GM12878 (cell line): ENCODE measurements at regions of chr13 and their contacts with region 1.

Region 1: GRCh38 chr13:46687810-46688209 is 109.2 kb downstream of the ESD start:
- DNase-seq: no peak
- ATAC-seq: peak; percentile 69
- H3K4me3 ChIP-seq: no peak overlapping the region
- H3K27ac ChIP-seq: no peak overlapping the region
- H3K4me1 ChIP-seq: peaks cover 7% of the 10 kb centered on the region; the same call in 1 of the 2 replicates
- H3K27me3 ChIP-seq: no peaks in the 10 kb centered on the region
- CTCF ChIP-seq: no peak
- EP300 ChIP-seq: no peak
- POLR2A ChIP-seq: no peak
- RAD21 ChIP-seq: no peak

Region 2: DNA sequence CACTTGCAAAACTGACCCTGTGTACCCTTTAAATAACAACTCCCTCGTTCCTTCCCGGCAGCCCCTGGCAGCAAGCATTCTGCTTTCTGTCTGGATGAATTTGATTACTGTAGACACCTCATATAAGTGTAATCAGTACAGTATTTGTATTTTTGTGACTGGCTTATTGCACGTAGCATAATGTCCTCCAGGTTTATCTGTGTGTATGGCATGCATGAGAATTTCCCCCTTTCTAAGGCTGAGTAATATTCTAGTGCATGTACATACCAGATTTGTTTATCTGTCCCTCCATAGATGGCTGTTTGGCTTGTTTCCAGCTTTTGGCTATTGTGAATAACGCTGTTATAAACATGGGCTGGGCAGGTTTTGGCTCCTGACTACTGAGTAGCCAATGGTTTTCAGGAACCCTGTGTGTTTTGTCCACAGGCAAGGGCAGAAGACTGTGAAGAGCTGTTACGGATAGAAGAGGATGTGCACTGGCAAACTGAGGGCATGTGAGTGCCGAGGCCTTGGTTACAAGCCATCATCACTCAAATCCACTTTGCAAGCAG is 11.2 kb after region 1 on chr13:
- CTCF ChIA-PET with region 1: interaction called, 7 read pairs
- POLR2A ChIA-PET with region 1: interaction called, 4 read pairs
- RAD21 ChIA-PET with region 1: interaction called, 3 read pairs
- SMC1A ChIA-PET with region 1: interaction called, 10 read pairs
- in situ Hi-C with region 1: no loop called
- intact Hi-C with region 1: no loop called
- DNase-seq: no peak
- ATAC-seq: no peak
- H3K4me3 ChIP-seq: no peak overlapping the region
- H3K27ac ChIP-seq: no peak overlapping the region
- H3K4me1 ChIP-seq: no peaks in the 10 kb centered on the region
- H3K27me3 ChIP-seq: no peaks in the 10 kb centered on the region
- CTCF ChIP-seq: no peak
- EP300 ChIP-seq: no peak
- POLR2A ChIP-seq: no peak
- RAD21 ChIP-seq: no peak

Region 3: GRCh38 chr13:46738055-46738454 is 50.2 kb after region 1 on chr13:
- CTCF ChIA-PET with region 1: no interaction called
- POLR2A ChIA-PET with region 1: no interaction called
- RAD21 ChIA-PET with region 1: no interaction called
- SMC1A ChIA-PET with region 1: no interaction called
- in situ Hi-C with region 1: no loop called
- intact Hi-C with region 1: no loop called
- DNase-seq: no peak
- ATAC-seq: no peak
- H3K4me3 ChIP-seq: no peak overlapping the region
- H3K27ac ChIP-seq: no peak overlapping the region
- H3K4me1 ChIP-seq: no peaks in the 10 kb centered on the region
- H3K27me3 ChIP-seq: no peaks in the 10 kb centered on the region
- CTCF ChIP-seq: no peak
- EP300 ChIP-seq: no peak
- POLR2A ChIP-seq: no peak
- RAD21 ChIP-seq: no peak